Activated CD8-positive, alpha-beta T cell treated with anti-CD3 and anti-CD28 coated beads, Interleukin-2, amount 10 ng/mL, durations not matched to agents 7 days and 5 days (primary cell): ENCODE measurements at regions of chr10 and their contacts with region 1.

Region 1: GRCh38 chr10:48215488-48216204 is 58.9 kb downstream of the FRMPD2 start:
- DNase-seq: peak; percentile 63
- ATAC-seq: peak; percentile 49
- H3K4me3 Mint-ChIP-seq: no peak overlapping the region
- H3K27ac Mint-ChIP-seq: no peak overlapping the region
- H3K4me1 Mint-ChIP-seq: no peaks in the 10 kb centered on the region
- H3K27me3 Mint-ChIP-seq: peaks cover 8% of the 10 kb centered on the region

Region 2: DNA sequence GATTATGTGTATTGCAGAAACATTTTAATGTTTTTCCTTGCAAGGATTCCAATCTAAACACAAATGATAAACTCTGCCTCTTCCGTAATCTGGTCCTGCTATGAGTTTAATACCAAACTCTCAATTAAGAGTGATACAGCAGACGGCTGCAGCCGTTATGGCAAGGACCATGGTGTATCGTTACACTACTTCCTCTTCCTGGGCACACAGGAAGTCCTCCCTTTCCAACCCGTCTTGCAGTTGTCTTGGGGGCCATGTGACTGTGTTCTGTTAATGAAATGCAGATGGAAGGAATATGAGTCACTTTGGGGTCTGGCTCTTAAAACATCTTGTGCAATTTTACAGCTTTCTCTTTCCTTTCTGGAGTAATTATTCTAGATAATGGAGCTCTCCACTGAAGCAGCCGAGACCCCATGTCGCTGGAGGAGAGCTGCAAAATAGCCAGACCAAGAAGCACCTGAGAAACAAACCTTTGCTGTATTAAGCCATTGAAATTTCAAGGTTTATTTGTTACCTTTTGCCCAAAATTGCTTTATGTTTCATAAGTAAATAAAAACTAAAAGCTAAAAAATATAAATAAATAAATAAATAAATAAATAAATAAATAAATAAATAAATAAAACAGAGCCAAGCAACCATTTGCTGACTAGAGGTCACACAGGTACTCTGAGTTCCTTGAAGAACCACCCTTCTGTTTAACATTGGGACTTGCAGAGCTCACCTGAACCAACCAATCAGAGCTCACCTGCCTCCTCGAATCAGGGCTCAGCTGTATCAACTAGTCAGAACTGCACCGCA is 15.9 kb before region 1 on chr10:
- CTCF ChIA-PET with region 1: no interaction called
- POLR2A ChIA-PET with region 1: no interaction called
- DNase-seq: no peak
- ATAC-seq: no peak
- H3K4me3 Mint-ChIP-seq: no peak overlapping the region
- H3K27ac Mint-ChIP-seq: no peak overlapping the region
- H3K4me1 Mint-ChIP-seq: no peaks in the 10 kb centered on the region
- H3K27me3 Mint-ChIP-seq: peaks cover 7% of the 10 kb centered on the region

Region 3: GRCh38 chr10:48227213-48227612 is 11.6 kb after region 1 on chr10:
- CTCF ChIA-PET with region 1: interaction called, 12 read pairs
- POLR2A ChIA-PET with region 1: no interaction called
- DNase-seq: no peak
- ATAC-seq: no peak
- H3K4me3 Mint-ChIP-seq: no peak overlapping the region
- H3K27ac Mint-ChIP-seq: no peak overlapping the region
- H3K4me1 Mint-ChIP-seq: peaks cover 3% of the 10 kb centered on the region
- H3K27me3 Mint-ChIP-seq: peaks cover 30% of the 10 kb centered on the region

Region 4: DNA sequence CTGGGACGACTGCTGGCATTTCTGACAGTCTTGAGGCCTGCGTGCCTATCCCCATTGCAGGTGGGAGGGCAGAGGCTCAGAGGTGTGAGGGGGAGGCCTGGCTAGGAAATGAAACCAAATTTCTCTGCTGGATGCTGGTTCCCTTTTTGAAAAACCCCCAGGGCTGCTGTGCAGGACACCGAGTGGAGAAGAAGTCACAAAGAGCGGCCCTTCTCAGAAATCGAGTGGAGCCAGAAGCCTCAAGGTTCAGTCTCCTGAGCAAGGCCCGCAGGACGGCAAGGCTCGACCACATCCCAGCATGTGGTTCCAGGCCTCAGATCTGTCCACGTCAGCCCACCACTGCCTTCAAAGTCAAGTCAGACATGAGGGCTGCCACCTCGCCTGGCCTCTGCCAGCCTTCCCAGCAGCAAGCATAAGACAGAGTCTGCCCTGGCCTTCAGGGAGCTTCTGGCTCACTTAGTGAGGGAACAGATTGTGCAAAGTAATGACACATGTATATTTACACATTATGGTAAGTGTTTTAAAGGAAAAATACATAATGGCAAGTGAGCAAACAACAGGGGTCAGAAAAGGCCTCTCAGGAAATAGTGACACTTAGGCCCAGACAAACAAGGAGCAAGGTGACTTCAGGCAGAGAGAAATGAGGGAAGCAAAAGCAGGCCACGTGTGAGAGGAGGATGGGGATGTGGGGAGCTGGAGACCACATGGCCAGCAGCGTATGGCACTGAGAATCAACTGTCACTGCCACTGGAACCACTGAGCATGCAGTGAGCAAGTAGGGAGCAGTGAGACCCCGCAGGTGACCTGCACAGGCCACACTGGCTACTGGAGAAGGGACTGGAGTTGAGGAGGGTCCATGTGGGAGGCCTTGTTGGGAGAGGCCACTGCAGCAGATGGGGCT is 302.5 kb after region 1 on chr10:
- CTCF ChIA-PET with region 1: no interaction called
- POLR2A ChIA-PET with region 1: no interaction called
- DNase-seq: no peak
- ATAC-seq: no peak
- H3K4me3 Mint-ChIP-seq: no peak overlapping the region
- H3K27ac Mint-ChIP-seq: peak overlapping the region; percentile 43
- H3K4me1 Mint-ChIP-seq: peaks cover 26% of the 10 kb centered on the region
- H3K27me3 Mint-ChIP-seq: peaks cover 47% of the 10 kb centered on the region